ENCODE measurements at regions of chr10 and their contacts with region 1.

Region 1: GRCh38 chr10:112071596-112072133 is 111.9 kb downstream of the GPAM start:
- DNase-seq: no peak
- H3K4me3 ChIP-seq: no peak overlapping the region
- H3K27ac ChIP-seq: no peak overlapping the region
- H3K4me1 ChIP-seq: no peaks in the 10 kb centered on the region
- H3K27me3 ChIP-seq: no peaks in the 10 kb centered on the region
- CTCF ChIP-seq: no peak
- POLR2A ChIP-seq: no peak

Region 2: DNA sequence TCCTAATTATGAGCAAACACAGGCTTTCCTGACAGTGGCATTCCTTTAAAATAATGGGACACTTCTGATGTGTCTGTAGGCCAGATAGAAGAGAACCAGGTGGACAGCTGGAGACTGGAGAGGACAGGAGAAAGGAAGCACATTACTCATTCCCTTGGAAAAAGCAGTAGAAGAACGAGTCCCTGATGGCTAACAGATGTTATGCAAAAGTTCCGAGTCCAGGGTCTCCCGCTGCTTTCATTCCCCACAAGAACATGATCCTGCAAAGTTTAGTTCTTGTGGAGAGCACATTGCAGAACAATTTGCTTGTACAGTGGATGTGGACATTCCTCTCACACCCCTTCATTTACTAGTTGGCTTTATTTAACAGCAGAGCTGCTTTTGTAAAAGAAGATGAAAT is 25.7 kb before region 1 on chr10:
- intact Hi-C with region 1: no loop called
- DNase-seq: no peak
- H3K4me3 ChIP-seq: no peak overlapping the region
- H3K27ac ChIP-seq: no peak overlapping the region
- H3K4me1 ChIP-seq: no peaks in the 10 kb centered on the region
- H3K27me3 ChIP-seq: no peaks in the 10 kb centered on the region
- CTCF ChIP-seq: no peak
- POLR2A ChIP-seq: no peak

Region 3: DNA sequence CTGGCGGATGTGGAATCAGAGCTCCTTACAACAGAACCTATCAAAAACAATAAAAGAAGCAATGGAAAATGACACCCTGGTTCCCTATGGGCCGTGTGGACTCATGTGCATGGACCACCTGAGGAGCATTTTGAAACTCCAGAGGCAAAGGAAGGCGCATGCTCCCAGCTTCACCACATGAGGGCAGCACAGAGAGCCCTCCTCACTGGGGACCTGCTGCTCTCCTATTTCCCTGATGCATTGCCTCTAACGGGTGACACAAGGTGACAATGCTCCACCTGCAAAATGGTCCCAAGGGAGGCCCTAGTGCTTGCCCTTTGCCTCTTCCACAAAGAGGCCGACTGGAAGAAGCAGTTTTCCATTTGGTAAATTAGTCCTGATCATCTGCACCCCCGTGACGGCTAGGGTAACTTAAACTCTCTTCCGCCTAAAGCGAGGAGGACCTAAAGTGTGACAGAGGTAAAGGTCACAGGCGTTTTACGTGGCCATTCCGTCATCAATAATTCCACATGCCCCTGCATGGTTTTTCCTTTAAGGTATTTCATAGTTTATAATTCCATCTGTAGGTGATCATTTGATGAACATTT is 44.2 kb after region 1 on chr10:
- intact Hi-C with region 1: loop called (anchors 2 kb)
- DNase-seq: no peak
- H3K4me3 ChIP-seq: no peak overlapping the region
- H3K27ac ChIP-seq: no peak overlapping the region
- H3K4me1 ChIP-seq: no peaks in the 10 kb centered on the region
- H3K27me3 ChIP-seq: no peaks in the 10 kb centered on the region
- CTCF ChIP-seq: peak in 2 of 3 experiments; percentile 19
- POLR2A ChIP-seq: no peak

Region 4: GRCh38 chr10:112160834-112161233 is 89.2 kb after region 1 on chr10:
- intact Hi-C with region 1: no loop called
- DNase-seq: no peak
- H3K4me3 ChIP-seq: no peak overlapping the region
- H3K27ac ChIP-seq: no peak overlapping the region
- H3K4me1 ChIP-seq: no peaks in the 10 kb centered on the region
- H3K27me3 ChIP-seq: no peaks in the 10 kb centered on the region
- CTCF ChIP-seq: no peak
- POLR2A ChIP-seq: no peak

Region 5: GRCh38 chr10:112209684-112210131 is 138.0 kb after region 1 on chr10:
- intact Hi-C with region 1: no loop called
- DNase-seq: peak in 1 of 2 donors; percentile 49
- H3K4me3 ChIP-seq: no peak overlapping the region
- H3K27ac ChIP-seq: no peak overlapping the region
- H3K4me1 ChIP-seq: no peaks in the 10 kb centered on the region
- H3K27me3 ChIP-seq: no peaks in the 10 kb centered on the region
- CTCF ChIP-seq: no peak
- POLR2A ChIP-seq: no peak